ENCODE measurements at regions of chr17 and their contacts with region 1.

Region 1: DNA sequence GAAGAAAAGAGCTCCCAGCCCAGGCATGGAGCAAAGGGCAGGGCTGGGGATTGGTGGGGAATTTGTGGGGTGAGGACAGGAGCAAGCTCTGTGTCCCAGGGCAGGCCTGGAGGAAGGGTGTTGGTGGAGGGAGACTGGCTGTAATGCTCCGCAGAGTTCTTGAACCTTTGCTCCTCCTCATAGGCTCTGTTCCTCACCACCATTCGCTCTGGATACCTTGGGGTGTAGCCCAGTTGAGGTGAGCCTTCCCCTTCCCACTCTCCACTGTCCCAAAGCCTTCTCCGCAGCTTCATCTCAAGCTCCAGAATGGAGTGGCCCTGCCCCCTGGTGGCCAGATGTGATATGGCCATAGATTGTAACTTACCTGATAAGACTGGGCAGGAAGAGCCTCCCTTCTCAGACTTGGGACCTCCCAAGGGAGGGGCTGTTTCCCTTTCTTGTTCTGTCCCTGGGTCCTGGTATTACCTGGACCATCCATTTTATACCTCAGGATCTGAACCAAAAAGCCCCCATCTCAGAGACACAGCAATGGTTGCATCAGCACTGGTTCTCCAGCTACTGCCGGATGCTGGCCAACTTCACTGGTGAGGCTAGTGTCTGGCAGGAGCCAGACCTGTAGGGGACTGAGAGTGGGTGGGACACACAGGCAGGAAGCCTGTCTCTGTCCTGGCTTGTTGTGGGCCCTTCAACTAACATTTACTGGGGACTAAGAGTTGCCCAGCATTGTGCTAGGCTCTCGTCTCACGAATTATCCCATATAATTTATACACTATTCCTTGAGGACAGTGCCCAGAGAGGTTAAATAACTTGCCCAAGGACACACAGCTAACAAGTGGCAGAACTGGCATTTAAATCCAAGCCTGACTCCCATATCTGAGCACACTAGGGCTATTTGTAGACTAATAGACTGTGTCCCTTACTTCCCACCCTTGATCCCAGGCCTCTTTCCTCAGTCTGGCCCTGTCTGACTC is 19.1 kb upstream of the STAC2 start:
- DNase-seq: peak; percentile 65 to 78 (median 73)
- H3K4me3 ChIP-seq: no peak overlapping the region
- H3K4me3 Mint-ChIP-seq: no peak overlapping the region
- H3K27ac ChIP-seq: no peak overlapping the region
- H3K27ac Mint-ChIP-seq: peak overlapping the region in 1 of 7 donors; percentile 10
- H3K4me1 ChIP-seq: peaks cover 0 to 7% of the 10 kb centered on the region in 2 donors
- H3K4me1 Mint-ChIP-seq: peaks cover 11% of the 10 kb centered on the region
- H3K27me3 ChIP-seq: peaks cover 0 to under 1% of the 10 kb centered on the region in 2 donors
- H3K27me3 Mint-ChIP-seq: peaks cover 3 to 10% (median 4%) of the 10 kb centered on the region in 3 donors
- CTCF ChIP-seq: peak; percentile 98

Region 2: GRCh38 chr17:39209317-39210092 is 35.4 kb before region 1 on chr17:
- intact Hi-C with region 1: loop called in 1 of 2 experiments (anchors 5 kb)
- DNase-seq: peak; percentile 67 to 86 (median 74)
- H3K4me3 ChIP-seq: peak overlapping the region; percentile 2 to 65 (median 40)
- H3K4me3 Mint-ChIP-seq: peak overlapping the region; percentile 74 to 81
- H3K27ac ChIP-seq: peak overlapping the region; percentile 3 to 51
- H3K27ac Mint-ChIP-seq: peak overlapping the region in 6 of 7 donors; percentile 73 to 86 (median 80)
- H3K4me1 ChIP-seq: peaks cover 19 to 21% of the 10 kb centered on the region in 2 donors
- H3K4me1 Mint-ChIP-seq: peaks cover 21% of the 10 kb centered on the region
- H3K27me3 ChIP-seq: peaks cover 0 to 11% of the 10 kb centered on the region in 2 donors
- H3K27me3 Mint-ChIP-seq: peaks cover 9 to 31% (median 12%) of the 10 kb centered on the region in 3 donors
- CTCF ChIP-seq: no peak